ENCODE measurements at regions of chr10 and their contacts with region 1.

Region 1: GRCh38 chr10:35517431-35518181 is 87.5 kb upstream of the GJD4 start:
- DNase-seq: no peak
- H3K4me3 ChIP-seq: no peak overlapping the region
- H3K27ac ChIP-seq: no peak overlapping the region
- H3K27me3 ChIP-seq: no peaks in the 10 kb centered on the region
- CTCF ChIP-seq: no peak

Region 2: GRCh38 chr10:35598384-35598783 is 80.8 kb after region 1 on chr10:
- CTCF ChIA-PET with region 1: no interaction called
- POLR2A ChIA-PET with region 1: no interaction called
- DNase-seq: no peak
- H3K4me3 ChIP-seq: no peak overlapping the region
- H3K27ac ChIP-seq: no peak overlapping the region
- H3K27me3 ChIP-seq: no peaks in the 10 kb centered on the region
- CTCF ChIP-seq: peak; percentile 52

Region 3: DNA sequence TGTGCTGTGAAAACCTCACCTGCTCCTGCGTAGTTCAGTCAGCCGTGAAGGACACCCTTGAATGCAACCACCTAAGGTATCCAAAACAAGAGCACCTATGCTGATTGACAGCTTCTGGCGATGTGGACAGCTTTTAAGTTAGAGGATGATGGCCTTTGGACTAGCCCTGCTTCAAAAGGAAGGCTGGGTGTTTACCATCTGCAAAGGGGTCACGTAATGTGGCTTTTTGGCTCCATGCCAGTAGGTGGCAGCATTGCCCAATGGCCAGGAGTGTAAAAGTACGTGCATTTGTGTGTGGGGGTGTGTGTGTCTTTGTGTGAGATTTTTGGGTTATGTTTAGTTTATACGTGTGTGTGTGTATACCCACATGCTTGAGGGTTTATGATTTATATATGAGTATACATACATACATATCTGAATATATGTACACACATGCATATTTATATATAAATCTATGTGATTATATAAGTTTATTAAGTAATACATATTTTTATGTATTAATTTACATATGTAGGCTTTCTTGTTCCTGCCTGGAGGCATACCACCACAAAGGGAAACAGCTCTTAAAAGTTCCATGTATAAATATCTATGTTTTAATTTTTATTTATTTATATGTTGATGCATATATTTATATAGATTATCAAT is 1371.4 kb after region 1 on chr10:
- CTCF ChIA-PET with region 1: interaction called, 11 read pairs
- POLR2A ChIA-PET with region 1: no interaction called
- DNase-seq: no peak
- H3K4me3 ChIP-seq: no peak overlapping the region
- H3K27ac ChIP-seq: no peak overlapping the region
- H3K27me3 ChIP-seq: no peaks in the 10 kb centered on the region
- CTCF ChIP-seq: no peak

Measured in AG04450 (cell line).